ENCODE measurements at regions of chr17 and their contacts with region 1.

Region 1: GRCh38 chr17:62065598-62066468 is 755 bp upstream of the MED13 start:
- DNase-seq: peak; percentile 99
- H3K4me3 ChIP-seq: peak overlapping the region; percentile 80 to 98 (median 98)
- H3K27ac ChIP-seq: peak overlapping the region; percentile 95 to 100 (median 100)
- H3K4me1 ChIP-seq: peaks cover 0 to 39% (median 28%) of the 10 kb centered on the region in 4 donors
- H3K27me3 ChIP-seq: no peaks in the 10 kb centered on the region
- CTCF ChIP-seq: peak; percentile 26 to 89 (median 80)
- EP300 ChIP-seq: no peak
- POLR2A ChIP-seq: peak; percentile 66 to 81

Region 2: GRCh38 chr17:60677308-60678124 is 1388.3 kb before region 1 on chr17 and contains the start of gene BCAS3:
- intact Hi-C with region 1: loop called (anchors 10 kb)
- DNase-seq: peak; percentile 99
- H3K4me3 ChIP-seq: peak within 1 kb of the TSS; percentile 70 to 90 (median 88)
- H3K27ac ChIP-seq: peak within 1 kb of the TSS; percentile 81 to 86 (median 82)
- H3K4me1 ChIP-seq: peaks cover 0 to 14% (median 11%) of the 10 kb centered on the region in 4 donors
- H3K27me3 ChIP-seq: no peaks in the 10 kb centered on the region
- CTCF ChIP-seq: no peak
- EP300 ChIP-seq: no peak
- POLR2A ChIP-seq: peak; percentile 63 to 75
- total RNA-seq, gene BCAS3: 28.5 to 38.5 (median 31.8) TPM

Region 3: GRCh38 chr17:61412143-61412859 is 653.5 kb before region 1 on chr17:
- intact Hi-C with region 1: loop called (anchors 2 kb)
- DNase-seq: peak; percentile 90
- H3K4me3 ChIP-seq: peak overlapping the region; percentile 29 to 60 (median 53)
- H3K27ac ChIP-seq: peak overlapping the region; percentile 46 to 91 (median 63)
- H3K4me1 ChIP-seq: peaks cover 0 to 57% (median 54%) of the 10 kb centered on the region in 4 donors
- H3K27me3 ChIP-seq: peaks cover 33 to 63% (median 46%) of the 10 kb centered on the region in 3 donors
- CTCF ChIP-seq: peak; percentile 84 to 99 (median 94)
- EP300 ChIP-seq: no peak
- POLR2A ChIP-seq: no peak

Region 4: DNA sequence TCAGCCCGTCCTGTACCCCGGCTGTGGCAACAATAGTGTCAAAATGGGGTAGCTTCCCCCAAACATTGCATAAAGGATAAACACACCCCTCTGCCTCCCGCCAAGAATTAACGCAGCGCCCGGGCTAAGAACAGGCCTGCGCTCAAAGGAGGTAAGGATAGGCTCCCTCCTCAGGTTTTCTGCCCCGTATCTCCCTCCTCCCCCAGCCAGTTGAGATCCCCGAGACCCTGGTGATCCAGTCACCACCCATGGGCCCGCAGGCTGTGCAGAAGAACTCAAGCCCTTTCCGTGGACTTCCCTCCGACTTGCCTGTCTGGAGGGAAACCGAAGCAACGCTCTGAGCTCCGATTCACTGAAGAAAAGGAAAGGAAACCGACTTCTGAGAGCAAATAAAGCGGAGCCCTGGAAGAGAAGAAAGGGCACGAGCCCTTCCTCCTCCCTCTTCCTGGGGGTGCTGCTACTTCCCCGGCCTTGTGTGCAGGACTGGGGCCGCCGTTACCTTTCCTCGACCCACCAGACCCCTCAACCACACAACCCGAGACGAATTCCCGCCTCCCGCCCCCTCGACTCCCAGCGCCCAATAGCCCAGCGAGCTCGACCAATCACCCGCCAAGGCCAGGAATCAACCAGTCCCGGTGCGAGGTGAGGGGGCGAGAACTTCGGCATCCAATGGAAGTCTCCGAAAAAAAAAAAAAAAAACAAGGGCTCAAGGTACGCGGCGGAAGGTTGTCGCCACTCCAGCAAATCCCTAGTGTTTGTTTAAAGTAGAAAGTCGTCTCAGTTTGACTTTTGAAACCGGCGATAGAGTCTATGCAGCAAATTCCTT is 202.6 kb before region 1 on chr17 and contains the start of gene BRIP1:
- intact Hi-C with region 1: loop called (anchors 2 kb)
- DNase-seq: peak; percentile 95
- H3K4me3 ChIP-seq: peak within 1 kb of the TSS; percentile 57 to 67 (median 65)
- H3K27ac ChIP-seq: peak within 1 kb of the TSS; percentile 71 to 80 (median 77)
- H3K4me1 ChIP-seq: peaks cover 0 to 12% (median 5%) of the 10 kb centered on the region in 4 donors
- H3K27me3 ChIP-seq: no peaks in the 10 kb centered on the region
- CTCF ChIP-seq: no peak
- EP300 ChIP-seq: no peak
- POLR2A ChIP-seq: no peak
- total RNA-seq, gene BRIP1: 0.27 to 0.55 (median 0.36) TPM in 3 of 4 donors, not detected in the other

Region 5: DNA sequence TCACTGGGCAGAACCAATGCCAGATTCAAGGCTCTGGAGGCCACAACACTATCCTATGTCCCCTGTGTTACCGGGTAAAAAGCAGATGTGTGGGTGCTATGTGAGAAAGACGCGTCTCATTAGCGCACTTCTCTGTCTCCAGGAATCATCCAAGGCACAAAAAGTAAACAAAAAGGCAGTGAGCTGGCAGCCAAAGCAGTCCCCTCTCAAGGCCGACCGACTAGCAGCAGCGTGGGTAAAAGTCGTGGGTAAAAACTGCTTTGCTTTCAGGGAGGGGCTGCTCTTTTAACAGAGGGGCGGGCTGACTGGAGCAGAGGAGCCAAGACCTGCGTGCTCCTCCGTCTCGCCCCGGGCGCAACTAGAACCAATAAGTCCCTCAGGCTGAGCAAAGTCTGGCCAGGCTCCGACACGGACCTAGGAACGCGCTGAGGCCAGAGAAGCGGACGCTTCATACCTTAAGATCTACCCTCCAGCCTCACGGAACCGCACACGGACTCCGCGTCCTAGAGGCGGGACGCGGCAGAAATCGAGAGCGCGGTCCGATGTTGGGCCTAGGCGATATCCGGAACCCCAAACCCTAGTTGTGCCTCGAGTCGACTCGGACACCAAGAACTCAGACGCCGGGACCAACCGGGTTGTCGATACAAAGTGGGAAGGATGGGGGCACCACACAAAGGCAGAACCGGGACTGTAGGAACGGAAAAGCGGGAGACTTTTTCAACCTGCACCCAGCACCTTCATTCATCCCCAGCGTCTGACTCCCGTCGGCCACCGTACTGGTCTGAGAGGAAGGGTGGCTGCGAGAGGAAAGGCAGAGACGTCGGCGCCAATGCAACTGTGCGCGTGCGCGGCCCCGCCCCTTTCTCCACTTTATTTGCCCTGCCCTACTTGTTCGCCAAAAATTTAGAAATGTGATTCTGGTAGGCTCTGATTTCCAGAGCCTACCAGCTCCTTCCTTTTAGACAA is 138.3 kb before region 1 on chr17 and contains the start of gene INTS2:
- intact Hi-C with region 1: loop called (anchors 1 kb)
- DNase-seq: peak; percentile 98
- H3K4me3 ChIP-seq: peak within 1 kb of the TSS; percentile 61 to 80 (median 66)
- H3K27ac ChIP-seq: peak within 1 kb of the TSS; percentile 86 to 90 (median 88)
- H3K4me1 ChIP-seq: peaks cover 0 to 26% (median 11%) of the 10 kb centered on the region in 4 donors
- H3K27me3 ChIP-seq: no peaks in the 10 kb centered on the region
- CTCF ChIP-seq: no peak
- EP300 ChIP-seq: peak in 2 of 4 donors; percentile 1 to 9
- POLR2A ChIP-seq: peak; percentile 78 to 85
- total RNA-seq, gene INTS2: 7.2 to 15.3 (median 8.9) TPM

Region 6: GRCh38 chr17:61997664-61998063 is 68.2 kb before region 1 on chr17:
- intact Hi-C with region 1: loop called (anchors 5 kb)
- DNase-seq: no peak
- H3K4me3 ChIP-seq: no peak overlapping the region
- H3K27ac ChIP-seq: peak overlapping the region in 3 of 4 donors; percentile 24 to 59 (median 56)
- H3K4me1 ChIP-seq: peaks cover 0 to 35% (median 25%) of the 10 kb centered on the region in 4 donors
- H3K27me3 ChIP-seq: no peaks in the 10 kb centered on the region
- CTCF ChIP-seq: no peak
- EP300 ChIP-seq: peak in 1 of 4 donors; percentile 49
- POLR2A ChIP-seq: no peak

Region 7: GRCh38 chr17:62024894-62025293 is 40.9 kb before region 1 on chr17:
- intact Hi-C with region 1: no loop called
- DNase-seq: no peak
- H3K4me3 ChIP-seq: no peak overlapping the region
- H3K27ac ChIP-seq: no peak overlapping the region
- H3K4me1 ChIP-seq: peaks cover 0 to 6% (median 0%) of the 10 kb centered on the region in 4 donors
- H3K27me3 ChIP-seq: no peaks in the 10 kb centered on the region
- CTCF ChIP-seq: no peak
- EP300 ChIP-seq: no peak
- POLR2A ChIP-seq: no peak

Region 8: GRCh38 chr17:62093188-62094155 is 27.6 kb after region 1 on chr17:
- intact Hi-C with region 1: no loop called
- DNase-seq: no peak
- H3K4me3 ChIP-seq: no peak overlapping the region
- H3K27ac ChIP-seq: no peak overlapping the region
- H3K4me1 ChIP-seq: peaks cover 0 to 11% (median 3%) of the 10 kb centered on the region in 4 donors
- H3K27me3 ChIP-seq: no peaks in the 10 kb centered on the region
- CTCF ChIP-seq: no peak
- EP300 ChIP-seq: no peak
- POLR2A ChIP-seq: no peak

Region 9: DNA sequence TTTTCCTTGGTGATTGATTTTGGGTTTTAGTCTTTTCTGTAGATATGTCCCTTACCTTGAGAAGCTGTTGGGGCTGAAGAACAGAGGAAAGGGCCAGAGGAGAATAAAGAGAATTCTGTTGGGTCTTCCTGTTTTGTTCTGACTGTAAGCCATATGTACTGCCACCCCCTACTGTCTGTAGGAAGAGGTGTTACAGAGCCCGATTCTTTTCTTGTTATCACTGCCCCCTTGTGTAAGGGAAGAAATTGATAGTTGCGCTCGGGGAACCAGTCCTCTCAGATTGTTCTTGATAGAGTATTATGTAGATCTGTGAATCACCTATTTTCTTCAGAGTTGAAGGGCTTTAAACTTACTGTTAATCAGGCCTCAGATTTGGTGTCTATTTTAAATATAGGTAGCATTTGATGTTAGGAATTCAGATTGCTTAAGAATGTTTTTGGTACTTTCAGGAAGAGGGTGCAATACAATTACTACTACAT is 902.7 kb after region 1 on chr17:
- intact Hi-C with region 1: loop called (anchors 10 kb)
- DNase-seq: no peak
- H3K4me3 ChIP-seq: no peak overlapping the region
- H3K27ac ChIP-seq: no peak overlapping the region
- H3K4me1 ChIP-seq: peaks cover 0 to 22% (median 14%) of the 10 kb centered on the region in 4 donors
- H3K27me3 ChIP-seq: no peaks in the 10 kb centered on the region
- CTCF ChIP-seq: peak; percentile 69 to 89 (median 74)
- EP300 ChIP-seq: no peak
- POLR2A ChIP-seq: no peak